Activated B cell treated with CpG ODN at 0.5 μM for 24 hours (primary cell): ENCODE measurements at regions of chr5 and their contacts with region 1.

Region 1: GRCh38 chr5:98768160-98769005 is 5.1 kb upstream of the RGMB start:
- DNase-seq: peak; percentile 28
- ATAC-seq: peak; percentile 28
- H3K4me3 Mint-ChIP-seq: peak overlapping the region; percentile 96
- H3K27ac Mint-ChIP-seq: no peak overlapping the region
- H3K4me1 Mint-ChIP-seq: peaks cover 40% of the 10 kb centered on the region
- H3K27me3 Mint-ChIP-seq: peaks cover 29% of the 10 kb centered on the region
- CTCF ChIP-seq: no peak

Region 2: DNA sequence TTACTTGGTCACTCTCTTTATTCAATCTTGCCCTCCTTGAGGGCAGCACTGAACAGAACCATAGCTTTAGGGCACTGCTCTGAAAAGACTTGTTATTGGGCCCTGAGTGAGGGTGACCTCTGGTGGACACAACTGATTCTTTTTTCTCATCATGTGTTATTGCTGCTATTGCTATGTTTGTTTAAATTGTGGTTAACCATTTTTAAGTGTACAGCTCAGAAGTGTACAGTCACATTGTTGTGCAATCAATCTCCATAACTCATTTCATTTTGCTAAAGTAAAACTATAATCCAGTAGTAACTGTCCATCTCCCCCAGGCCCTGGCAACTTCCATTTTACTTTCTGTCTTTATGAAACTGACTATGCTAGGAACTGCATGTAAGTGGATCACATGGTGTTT is 1234.2 kb before region 1 on chr5:
- CTCF ChIA-PET with region 1: interaction called, 4 read pairs
- POLR2A ChIA-PET with region 1: no interaction called
- intact Hi-C with region 1: loop called (anchors 5 kb)
- DNase-seq: no peak
- ATAC-seq: no peak
- H3K4me3 Mint-ChIP-seq: no peak overlapping the region
- H3K27ac Mint-ChIP-seq: no peak overlapping the region
- H3K4me1 Mint-ChIP-seq: no peaks in the 10 kb centered on the region
- H3K27me3 Mint-ChIP-seq: no peaks in the 10 kb centered on the region
- CTCF ChIP-seq: no peak

Region 3: DNA sequence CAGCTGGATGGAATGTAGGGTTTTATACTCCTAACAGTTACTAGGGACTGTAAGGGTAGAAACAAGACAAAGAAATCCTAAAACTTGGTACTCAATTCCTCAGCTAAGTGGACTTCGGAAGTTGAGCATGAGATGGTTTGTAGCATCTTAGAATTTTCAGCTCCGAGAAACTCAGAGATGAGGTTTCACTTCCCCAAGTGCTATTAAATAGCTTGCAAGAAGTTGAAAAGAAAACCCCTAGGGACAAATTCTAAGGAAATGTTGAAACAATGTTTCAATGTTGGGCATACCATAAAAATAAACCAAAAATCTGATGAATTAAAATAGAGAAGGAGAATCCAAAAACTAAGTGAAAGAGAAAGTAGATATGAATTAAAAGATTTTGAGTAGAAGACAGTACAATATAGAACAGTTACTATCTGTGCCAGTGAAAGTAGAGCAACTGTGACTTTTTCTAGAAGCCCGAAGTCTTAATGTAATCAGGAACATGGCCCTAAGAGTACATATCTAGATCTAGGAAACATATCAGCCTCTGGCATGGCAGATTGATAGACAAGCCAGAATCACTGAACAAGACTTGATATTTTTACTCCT is 303.5 kb before region 1 on chr5:
- CTCF ChIA-PET with region 1: no interaction called
- POLR2A ChIA-PET with region 1: no interaction called
- intact Hi-C with region 1: loop called (anchors 1 kb)
- DNase-seq: no peak
- ATAC-seq: peak; percentile 57
- H3K4me3 Mint-ChIP-seq: peak overlapping the region; percentile 9
- H3K27ac Mint-ChIP-seq: no peak overlapping the region
- H3K4me1 Mint-ChIP-seq: peaks cover 16% of the 10 kb centered on the region
- H3K27me3 Mint-ChIP-seq: no peaks in the 10 kb centered on the region
- CTCF ChIP-seq: no peak

Region 4: DNA sequence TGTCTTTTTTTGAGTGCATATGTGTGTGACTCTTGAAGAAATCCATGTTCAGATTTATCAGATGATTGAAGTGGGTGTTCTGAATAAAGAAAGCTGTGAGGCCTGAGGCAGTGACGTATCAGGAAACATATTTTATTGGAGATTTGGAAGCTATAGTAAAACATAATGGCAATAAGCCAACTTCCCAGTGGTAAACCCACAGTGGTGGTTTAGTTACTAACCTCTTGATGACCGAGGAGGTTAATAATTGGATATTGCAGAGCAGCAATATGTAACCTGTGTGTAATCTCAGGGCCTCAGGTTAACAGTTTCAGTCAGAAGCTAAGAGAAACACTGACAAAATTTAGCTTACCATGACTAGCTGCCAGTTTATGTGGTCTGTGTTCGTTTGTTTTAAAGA is 12.0 kb after region 1 on chr5:
- CTCF ChIA-PET with region 1: interaction called, 22 read pairs
- POLR2A ChIA-PET with region 1: no interaction called
- intact Hi-C with region 1: no loop called
- DNase-seq: no peak
- ATAC-seq: no peak
- H3K4me3 Mint-ChIP-seq: no peak overlapping the region
- H3K27ac Mint-ChIP-seq: no peak overlapping the region
- H3K4me1 Mint-ChIP-seq: peaks cover 22% of the 10 kb centered on the region
- H3K27me3 Mint-ChIP-seq: no peaks in the 10 kb centered on the region
- CTCF ChIP-seq: no peak

Region 5: GRCh38 chr5:98796197-98796972 is 28.0 kb after region 1 on chr5:
- CTCF ChIA-PET with region 1: interaction called, 35 read pairs
- POLR2A ChIA-PET with region 1: no interaction called
- intact Hi-C with region 1: loop called (anchors 1 kb)
- DNase-seq: no peak
- ATAC-seq: peak; percentile 75
- H3K4me3 Mint-ChIP-seq: no peak overlapping the region
- H3K27ac Mint-ChIP-seq: no peak overlapping the region
- H3K4me1 Mint-ChIP-seq: peaks cover 8% of the 10 kb centered on the region
- H3K27me3 Mint-ChIP-seq: no peaks in the 10 kb centered on the region
- CTCF ChIP-seq: peak; percentile 26